ENCODE measurements at regions of chr2 and their contacts with region 1.

Region 1: DNA sequence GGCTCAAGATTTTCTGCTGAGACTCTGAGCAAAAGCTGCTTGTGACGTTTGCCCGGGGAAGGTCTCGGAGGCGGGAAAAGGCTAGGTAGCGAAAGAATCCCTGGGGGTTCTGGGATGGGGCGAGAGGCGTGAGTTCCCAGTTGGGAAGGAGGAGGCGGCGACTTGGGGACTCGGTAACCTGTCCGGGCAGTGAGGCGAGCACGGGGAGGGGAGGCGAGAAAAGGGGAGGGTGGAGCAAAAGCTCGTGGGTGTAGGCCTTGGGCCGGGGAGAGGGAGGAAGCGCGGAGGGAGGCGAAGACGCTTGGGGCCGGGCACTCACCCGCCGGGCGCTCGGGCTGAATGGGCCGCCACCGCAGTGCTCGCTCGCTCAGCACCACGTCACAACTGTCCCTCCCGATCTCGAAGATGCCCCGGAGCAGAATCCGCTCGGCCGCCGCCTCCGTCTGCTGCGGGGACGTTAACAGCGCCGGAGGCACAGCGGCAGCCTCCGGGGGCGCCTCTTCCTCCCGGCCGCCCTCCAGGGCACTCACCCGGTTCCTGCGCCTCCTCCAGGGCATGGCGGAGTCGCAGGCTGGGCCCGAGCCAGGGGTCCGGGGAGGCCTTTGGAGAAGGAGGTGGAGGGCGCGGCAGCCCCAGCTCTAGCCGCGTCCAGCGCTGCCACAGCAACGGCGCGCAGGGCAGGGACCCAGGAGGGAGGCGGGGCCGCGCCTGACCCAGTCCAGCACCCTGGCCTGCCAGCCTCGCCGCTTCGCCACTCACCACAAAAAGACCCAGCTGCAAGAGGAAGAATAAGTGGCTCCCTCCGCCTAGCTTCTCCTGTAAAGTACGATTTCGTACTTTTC is at the start of gene CERKL:
- DNase-seq: peak; percentile 71
- H3K4me3 Mint-ChIP-seq: peak within 1 kb of the TSS; percentile 83
- H3K27ac Mint-ChIP-seq: no peak within 1 kb of the TSS
- H3K4me1 Mint-ChIP-seq: peaks cover 8% of the 10 kb centered on the region
- H3K27me3 Mint-ChIP-seq: peaks cover 66% of the 10 kb centered on the region
- total RNA-seq, gene CERKL: 0.14 TPM in 1 of 2 replicates, not detected in the other

Region 2: DNA sequence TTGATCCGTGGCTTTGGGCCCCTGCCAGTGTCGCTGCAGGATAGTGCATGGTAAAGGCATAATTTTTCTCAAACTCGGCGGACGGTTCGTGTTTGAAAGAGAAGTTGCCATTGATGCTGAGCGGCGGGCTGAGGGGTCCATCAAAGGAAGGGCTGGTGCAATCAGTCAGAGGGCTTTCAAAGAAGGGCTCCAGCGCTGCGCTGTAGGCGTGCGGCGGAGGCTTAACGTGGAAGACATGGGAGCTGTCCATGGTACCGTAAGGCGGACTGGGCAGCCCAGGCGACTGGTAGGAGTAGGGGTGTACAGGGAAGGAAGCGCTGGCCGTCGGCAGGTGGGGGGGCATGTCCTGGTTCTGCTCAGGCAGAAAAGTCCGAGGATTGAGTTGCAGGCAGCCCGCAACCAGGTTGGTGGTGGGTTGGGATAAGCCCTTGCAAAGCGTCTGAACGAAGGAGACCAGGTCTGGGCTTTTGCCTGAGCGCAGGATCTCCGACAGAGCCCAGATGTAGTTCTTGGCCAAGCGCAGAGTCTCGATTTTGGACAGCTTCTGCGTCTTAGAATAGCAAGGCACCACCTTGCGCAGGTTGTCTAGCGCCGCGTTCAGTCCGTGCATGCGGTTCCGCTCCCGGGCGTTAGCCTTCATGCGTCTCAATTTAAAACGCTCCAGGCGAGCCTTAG is 21.4 kb after region 1 on chr2:
- intact Hi-C with region 1: loop called (anchors 2 kb)
- DNase-seq: peak; percentile 92
- H3K4me3 Mint-ChIP-seq: no peak overlapping the region
- H3K27ac Mint-ChIP-seq: peak overlapping the region; percentile 82
- H3K4me1 Mint-ChIP-seq: peaks cover 30% of the 10 kb centered on the region
- H3K27me3 Mint-ChIP-seq: peaks cover 75% of the 10 kb centered on the region

Measured in activated CD4-positive, alpha-beta T cell treated with anti-CD3 and anti-CD28 coated beads, Interleukin-2, amount 10 ng/mL, durations not matched to agents 24 days and 14 days (primary cell).